OCI-LY7 (cell line): ENCODE measurements at regions of chr3 and their contacts with region 1.

Region 1: GRCh38 chr3:189833996-189834395 is 202.8 kb downstream of the TP63 start:
- DNase-seq: no peak
- H3K4me3 ChIP-seq: no peak overlapping the region
- H3K27ac ChIP-seq: no peak overlapping the region
- H3K4me1 ChIP-seq: peaks cover 32% of the 10 kb centered on the region
- CTCF ChIP-seq: no peak

Region 2: DNA sequence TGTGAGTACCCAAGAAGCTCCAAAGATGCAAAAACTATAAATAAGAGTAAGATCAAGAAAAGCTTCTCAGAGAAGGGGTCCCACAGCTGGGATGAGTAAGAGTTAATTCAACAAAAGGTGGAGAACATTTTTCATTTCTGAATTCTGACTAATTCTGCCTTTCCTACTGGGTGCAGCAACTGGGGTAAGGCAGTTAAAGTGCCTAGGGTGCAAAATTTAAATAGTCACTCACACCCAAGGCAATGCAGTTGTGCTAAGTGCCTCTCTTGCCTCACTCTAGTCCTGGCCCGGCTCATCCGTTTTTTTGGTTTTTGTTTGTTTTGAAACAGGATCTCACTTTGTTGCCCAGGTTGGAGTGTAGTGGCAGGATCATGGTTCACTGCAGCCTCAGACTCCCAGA is 37.4 kb after region 1 on chr3:
- CTCF ChIA-PET with region 1: no interaction called
- POLR2A ChIA-PET with region 1: no interaction called
- intact Hi-C with region 1: no loop called
- DNase-seq: no peak
- H3K4me3 ChIP-seq: no peak overlapping the region
- H3K27ac ChIP-seq: no peak overlapping the region
- H3K4me1 ChIP-seq: no peaks in the 10 kb centered on the region
- CTCF ChIP-seq: no peak

Region 3: DNA sequence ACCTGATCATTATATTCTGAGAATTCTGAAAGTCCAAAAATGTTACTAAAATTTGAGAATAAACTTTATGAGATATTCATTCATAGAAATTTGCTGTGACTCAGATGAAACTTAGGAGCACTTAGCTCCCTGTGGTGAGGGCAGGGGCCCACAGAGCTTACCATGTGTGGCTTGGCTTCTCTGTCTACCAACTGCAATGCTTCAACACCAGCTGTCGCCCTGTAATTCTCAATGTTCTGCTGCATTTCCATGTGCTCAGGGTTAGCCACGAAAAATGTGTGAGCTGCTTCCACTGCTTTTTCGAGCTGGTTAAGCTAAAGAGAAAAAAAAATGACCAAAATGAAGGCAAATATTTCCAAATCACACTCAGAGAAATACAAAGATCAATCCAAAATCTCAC is 161.1 kb after region 1 on chr3:
- CTCF ChIA-PET with region 1: no interaction called
- POLR2A ChIA-PET with region 1: no interaction called
- intact Hi-C with region 1: no loop called
- DNase-seq: no peak
- H3K4me3 ChIP-seq: no peak overlapping the region
- H3K27ac ChIP-seq: no peak overlapping the region
- H3K4me1 ChIP-seq: no peaks in the 10 kb centered on the region
- CTCF ChIP-seq: no peak

Region 4: DNA sequence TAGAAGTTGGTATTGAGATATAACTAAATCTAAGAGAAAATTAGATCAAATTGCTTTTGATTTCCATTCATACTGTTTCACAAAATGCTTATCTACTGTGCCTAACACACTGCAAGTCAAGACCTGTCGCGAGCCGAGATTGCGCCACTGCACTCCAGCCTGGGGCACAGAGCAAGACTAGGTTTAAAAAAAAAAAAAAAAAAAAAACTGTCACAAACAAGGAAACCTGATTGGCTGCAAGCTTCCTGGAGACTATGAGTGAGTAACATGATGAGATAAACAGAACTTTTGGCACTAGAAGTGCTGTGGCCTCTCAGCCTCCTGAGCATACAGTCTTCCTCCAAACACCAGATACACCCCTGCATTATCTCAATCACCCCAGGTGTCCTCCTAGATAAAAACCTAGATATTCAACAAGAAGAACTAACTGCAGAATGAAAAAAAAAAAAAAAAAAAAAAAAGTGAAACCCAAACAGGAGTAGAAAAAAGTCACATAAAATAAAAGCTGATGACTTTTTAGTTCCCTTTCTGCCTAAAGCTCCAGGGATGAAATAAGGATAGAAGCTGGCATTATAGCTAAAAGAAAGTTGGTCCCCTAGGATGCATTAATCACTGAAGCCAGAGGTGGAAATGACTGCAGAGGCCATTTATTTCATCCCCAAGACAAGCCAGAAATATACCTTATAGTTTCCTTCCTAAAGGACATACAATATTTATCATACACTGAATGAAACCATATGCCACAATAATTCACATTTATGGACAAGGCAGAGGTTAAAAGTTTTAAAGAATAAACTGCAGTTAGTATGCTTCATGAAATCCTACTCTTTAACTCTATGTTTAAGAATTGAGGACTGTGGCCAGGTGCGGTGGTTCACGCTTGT is 204.3 kb after region 1 on chr3:
- CTCF ChIA-PET with region 1: no interaction called
- POLR2A ChIA-PET with region 1: no interaction called
- intact Hi-C with region 1: no loop called
- DNase-seq: no peak
- H3K4me3 ChIP-seq: no peak overlapping the region
- H3K27ac ChIP-seq: no peak overlapping the region
- H3K4me1 ChIP-seq: no peaks in the 10 kb centered on the region
- CTCF ChIP-seq: no peak

Region 5: DNA sequence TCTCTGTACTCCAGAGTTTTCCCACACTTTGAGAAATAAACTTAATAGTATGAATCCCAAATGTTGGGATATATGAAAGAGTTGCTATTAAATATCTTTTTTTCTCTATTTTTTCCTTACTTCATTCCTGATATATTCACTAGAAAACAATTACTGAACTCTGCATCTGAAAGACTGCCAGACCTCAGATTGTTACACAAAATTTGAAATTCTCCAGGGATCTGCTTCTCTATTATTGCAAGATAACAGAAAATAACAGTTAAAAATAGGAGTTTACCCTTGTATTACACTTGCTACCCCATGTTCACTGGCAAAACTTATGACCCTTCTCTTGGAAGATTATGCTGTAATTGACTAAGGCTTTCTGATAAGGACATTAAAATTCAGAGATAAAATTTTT is 298.4 kb after region 1 on chr3:
- CTCF ChIA-PET with region 1: no interaction called
- POLR2A ChIA-PET with region 1: no interaction called
- intact Hi-C with region 1: no loop called
- DNase-seq: no peak
- H3K4me3 ChIP-seq: no peak overlapping the region
- H3K27ac ChIP-seq: no peak overlapping the region
- H3K4me1 ChIP-seq: no peaks in the 10 kb centered on the region
- CTCF ChIP-seq: no peak

Region 6: GRCh38 chr3:191521055-191521454 is 1687.1 kb after region 1 on chr3:
- CTCF ChIA-PET with region 1: no interaction called
- POLR2A ChIA-PET with region 1: interaction called, 10 read pairs
- intact Hi-C with region 1: no loop called
- DNase-seq: no peak
- H3K4me3 ChIP-seq: no peak overlapping the region
- H3K27ac ChIP-seq: no peak overlapping the region
- H3K4me1 ChIP-seq: no peaks in the 10 kb centered on the region
- CTCF ChIP-seq: no peak